Naive thymus-derived CD4-positive, alpha-beta T cell (primary cell): ENCODE measurements at regions of chr5 and their contacts with region 1.

Region 1: GRCh38 chr5:159100025-159100781 is 487 bp upstream of the EBF1 start:
- DNase-seq: peak; percentile 72 to 86 (median 84)
- ATAC-seq: peak; percentile 93
- H3K4me3 ChIP-seq: peak overlapping the region; percentile 59
- H3K4me3 Mint-ChIP-seq: peak overlapping the region; percentile 87 to 93 (median 92)
- H3K27ac ChIP-seq: no peak overlapping the region
- H3K27ac Mint-ChIP-seq: peak overlapping the region; percentile 29 to 89 (median 75)
- H3K4me1 ChIP-seq: peaks cover 13 to 19% of the 10 kb centered on the region in 2 donors
- H3K4me1 Mint-ChIP-seq: peaks cover 31 to 51% (median 35%) of the 10 kb centered on the region in 7 donors
- H3K27me3 ChIP-seq: peaks cover 18 to 22% of the 10 kb centered on the region in 2 donors
- H3K27me3 Mint-ChIP-seq: peaks cover 52 to 92% (median 60%) of the 10 kb centered on the region in 5 donors

Region 2: GRCh38 chr5:158435161-158435616 is 665.0 kb before region 1 on chr5:
- CTCF ChIA-PET with region 1: no interaction called
- POLR2A ChIA-PET with region 1: no interaction called
- intact Hi-C with region 1: loop called (anchors 5 to 10 kb)
- DNase-seq: peak in 8 of 9 donors; percentile 19 to 70 (median 56)
- ATAC-seq: peak; percentile 88
- H3K4me3 ChIP-seq: peak overlapping the region; percentile 2
- H3K4me3 Mint-ChIP-seq: peak overlapping the region; percentile 61 to 85 (median 80)
- H3K27ac ChIP-seq: peak overlapping the region; percentile 28
- H3K27ac Mint-ChIP-seq: peak overlapping the region; percentile 49 to 89 (median 74)
- H3K4me1 ChIP-seq: peaks cover 9 to 51% of the 10 kb centered on the region in 2 donors
- H3K4me1 Mint-ChIP-seq: peaks cover 21 to 73% (median 64%) of the 10 kb centered on the region in 7 donors
- H3K27me3 ChIP-seq: no peaks in the 10 kb centered on the region
- H3K27me3 Mint-ChIP-seq: no peaks in the 10 kb centered on the region

Region 3: GRCh38 chr5:158824241-158824882 is 275.8 kb before region 1 on chr5:
- CTCF ChIA-PET with region 1: no interaction called
- POLR2A ChIA-PET with region 1: no interaction called
- intact Hi-C with region 1: no loop called
- DNase-seq: no peak
- ATAC-seq: no peak
- H3K4me3 ChIP-seq: no peak overlapping the region
- H3K4me3 Mint-ChIP-seq: no peak overlapping the region
- H3K27ac ChIP-seq: no peak overlapping the region
- H3K27ac Mint-ChIP-seq: no peak overlapping the region
- H3K4me1 ChIP-seq: no peaks in the 10 kb centered on the region
- H3K4me1 Mint-ChIP-seq: peaks cover 0 to 28% (median 11%) of the 10 kb centered on the region in 7 donors
- H3K27me3 ChIP-seq: no peaks in the 10 kb centered on the region
- H3K27me3 Mint-ChIP-seq: no peaks in the 10 kb centered on the region

Region 4: GRCh38 chr5:158857976-158858375 is 242.2 kb before region 1 on chr5:
- CTCF ChIA-PET with region 1: interaction called, 3 read pairs
- POLR2A ChIA-PET with region 1: no interaction called
- intact Hi-C with region 1: loop called in 1 of 2 experiments (anchors 5 kb)
- DNase-seq: peak in 2 of 9 donors; percentile 19 to 20
- ATAC-seq: no peak
- H3K4me3 ChIP-seq: no peak overlapping the region
- H3K4me3 Mint-ChIP-seq: peak overlapping the region in 6 of 10 donors; percentile 12 to 58 (median 24)
- H3K27ac ChIP-seq: no peak overlapping the region
- H3K27ac Mint-ChIP-seq: peak overlapping the region in 7 of 9 donors; percentile 8 to 72 (median 30)
- H3K4me1 ChIP-seq: peaks cover 0 to 34% of the 10 kb centered on the region in 2 donors
- H3K4me1 Mint-ChIP-seq: peaks cover 9 to 64% (median 44%) of the 10 kb centered on the region in 7 donors
- H3K27me3 ChIP-seq: no peaks in the 10 kb centered on the region
- H3K27me3 Mint-ChIP-seq: peaks cover 0 to 8% (median 0%) of the 10 kb centered on the region in 5 donors

Region 5: GRCh38 chr5:159120446-159120845 is 20.2 kb after region 1 on chr5:
- CTCF ChIA-PET with region 1: no interaction called
- POLR2A ChIA-PET with region 1: interaction called, 4 read pairs
- intact Hi-C with region 1: loop called (anchors 1 kb)
- DNase-seq: peak in 7 of 9 donors; percentile 41 to 80 (median 71)
- ATAC-seq: peak; percentile 84
- H3K4me3 ChIP-seq: peak overlapping the region; percentile 6
- H3K4me3 Mint-ChIP-seq: peak overlapping the region; percentile 48 to 88 (median 72)
- H3K27ac ChIP-seq: peak overlapping the region; percentile 22
- H3K27ac Mint-ChIP-seq: peak overlapping the region; percentile 86 to 96 (median 93)
- H3K4me1 ChIP-seq: peaks cover 7 to 17% of the 10 kb centered on the region in 2 donors
- H3K4me1 Mint-ChIP-seq: peaks cover 9 to 26% (median 22%) of the 10 kb centered on the region in 7 donors
- H3K27me3 ChIP-seq: no peaks in the 10 kb centered on the region
- H3K27me3 Mint-ChIP-seq: peaks cover 0 to 14% (median 0%) of the 10 kb centered on the region in 5 donors

Region 6: GRCh38 chr5:159412284-159413046 is 312.3 kb after region 1 on chr5:
- CTCF ChIA-PET with region 1: no interaction called
- POLR2A ChIA-PET with region 1: no interaction called
- intact Hi-C with region 1: no loop called
- DNase-seq: peak; percentile 9 to 88 (median 80)
- ATAC-seq: peak; percentile 94
- H3K4me3 ChIP-seq: no peak overlapping the region
- H3K4me3 Mint-ChIP-seq: peak overlapping the region; percentile 26 to 80 (median 73)
- H3K27ac ChIP-seq: peak overlapping the region; percentile 22
- H3K27ac Mint-ChIP-seq: peak overlapping the region; percentile 80 to 97 (median 92)
- H3K4me1 ChIP-seq: peaks cover 30 to 42% of the 10 kb centered on the region in 2 donors
- H3K4me1 Mint-ChIP-seq: peaks cover 28 to 62% (median 42%) of the 10 kb centered on the region in 7 donors
- H3K27me3 ChIP-seq: no peaks in the 10 kb centered on the region
- H3K27me3 Mint-ChIP-seq: peaks cover 0 to 19% (median 0%) of the 10 kb centered on the region in 5 donors

Region 7: DNA sequence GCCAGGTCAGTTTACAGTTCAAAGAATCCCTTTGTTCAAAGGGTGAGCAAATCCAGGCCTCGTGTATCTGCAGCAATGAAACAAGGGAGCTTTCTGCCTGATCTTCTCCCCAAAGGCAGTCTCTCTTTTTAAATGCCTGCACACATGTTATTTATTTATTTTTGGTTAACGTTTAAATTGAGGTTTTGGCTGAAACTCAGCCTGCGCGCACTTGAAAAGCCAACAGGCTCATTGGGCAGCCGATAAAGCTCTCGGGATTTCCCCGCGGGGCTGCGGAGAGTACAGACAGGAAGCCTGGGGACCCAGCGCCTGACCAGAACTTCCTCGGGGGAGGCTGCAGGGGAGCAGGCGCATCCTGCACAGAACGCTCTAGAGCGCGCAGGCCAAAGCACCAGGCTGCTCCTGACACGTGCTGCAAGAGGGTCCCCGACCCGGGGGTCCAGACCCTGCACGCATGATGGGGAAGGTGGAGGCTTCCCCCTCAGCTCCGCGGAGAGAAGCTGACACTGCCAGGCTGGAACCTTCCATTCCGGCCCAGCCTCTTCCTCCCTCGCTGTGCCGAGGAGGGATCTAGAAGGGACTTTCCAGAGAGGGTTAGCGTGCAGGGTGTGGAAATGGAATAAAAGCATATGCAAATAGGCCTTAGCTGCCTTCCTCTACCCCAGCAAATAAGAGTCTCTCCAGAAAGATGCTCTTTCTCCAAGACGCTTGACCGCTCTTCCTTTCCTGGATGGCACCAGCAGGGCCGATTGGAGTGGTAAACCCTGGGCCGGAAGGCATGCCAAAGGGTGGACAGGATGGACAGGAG is 1367.6 kb after region 1 on chr5:
- CTCF ChIA-PET with region 1: no interaction called
- POLR2A ChIA-PET with region 1: no interaction called
- intact Hi-C with region 1: loop called in 1 of 2 experiments (anchors 5 kb)
- DNase-seq: peak; percentile 24 to 88 (median 48)
- ATAC-seq: peak; percentile 91
- H3K4me3 ChIP-seq: peak overlapping the region; percentile 69
- H3K4me3 Mint-ChIP-seq: peak overlapping the region; percentile 80 to 100 (median 88)
- H3K27ac ChIP-seq: peak overlapping the region; percentile 48
- H3K27ac Mint-ChIP-seq: peak overlapping the region; percentile 73 to 99 (median 81)
- H3K4me1 ChIP-seq: peaks cover 28 to 34% of the 10 kb centered on the region in 2 donors
- H3K4me1 Mint-ChIP-seq: peaks cover 36 to 79% (median 70%) of the 10 kb centered on the region in 7 donors
- H3K27me3 ChIP-seq: no peaks in the 10 kb centered on the region
- H3K27me3 Mint-ChIP-seq: no peaks in the 10 kb centered on the region